H1 (cell line): ENCODE measurements at regions of chr1 and their contacts with region 1.

Region 1: DNA sequence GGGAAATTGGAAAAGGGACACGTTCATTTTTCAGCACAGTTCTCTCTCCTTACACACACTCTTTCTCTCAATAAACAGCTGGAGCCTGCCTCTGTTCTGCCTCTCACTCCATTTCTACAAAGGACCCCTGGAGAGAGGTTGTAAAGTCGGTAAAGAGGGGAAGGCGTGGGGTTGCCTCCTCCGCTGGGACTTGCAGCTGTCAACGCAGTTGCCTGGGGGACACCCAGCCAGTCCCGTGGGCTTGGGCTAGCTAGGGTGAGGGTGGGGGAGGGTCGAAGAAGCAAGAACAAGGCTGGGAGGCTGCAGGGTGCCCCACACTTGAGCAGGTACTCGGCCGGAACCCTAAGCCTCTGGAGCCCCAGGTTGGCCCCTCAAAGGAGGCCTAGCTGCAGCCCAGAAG is 27.6 kb downstream of the C1orf216 start:
- DNase-seq: no peak
- H3K4me3 ChIP-seq: peak overlapping the region in 2 of 4 experiments; percentile 3 to 6; a peak in 3 of 8 replicates
- H3K27ac ChIP-seq: no peak overlapping the region
- H3K4me1 ChIP-seq: peaks cover 2 to 14% (median 5%) of the 10 kb centered on the region in 4 experiments; a peak in 6 of 7 replicates
- H3K27me3 ChIP-seq: no peaks in the 10 kb centered on the region
- CTCF ChIP-seq: no peak
- EP300 ChIP-seq: no peak
- POLR2A ChIP-seq: no peak
- RAD21 ChIP-seq: no peak

Region 2: DNA sequence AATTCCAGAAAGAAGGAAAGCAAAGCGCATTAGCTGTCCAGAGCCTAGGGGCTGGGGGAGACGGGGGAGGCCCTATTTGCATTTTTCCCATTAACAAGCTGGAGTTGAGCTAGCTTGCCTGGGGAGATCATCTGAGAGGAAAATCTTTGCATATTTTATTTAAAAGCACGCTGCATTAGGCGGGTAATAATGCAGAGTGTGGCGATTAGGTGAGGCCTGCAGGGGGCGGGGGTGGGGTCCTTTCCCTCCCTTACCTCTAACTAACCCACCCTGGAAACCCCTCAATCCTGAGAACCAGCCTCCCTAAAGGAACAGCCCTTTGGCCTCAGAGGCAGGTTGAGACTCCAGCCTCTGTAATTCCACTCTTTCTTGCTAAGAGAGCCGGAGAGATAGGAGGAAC is 11.4 kb after region 1 on chr1:
- CTCF ChIA-PET with region 1: interaction called, 14 read pairs
- POLR2A ChIA-PET with region 1: interaction called, 5 read pairs
- DNase-seq: no peak
- H3K4me3 ChIP-seq: peak overlapping the region in 3 of 4 experiments; percentile 13 to 45 (median 32); a peak in 3 of 8 replicates
- H3K27ac ChIP-seq: no peak overlapping the region
- H3K4me1 ChIP-seq: peaks cover 8 to 19% (median 11%) of the 10 kb centered on the region in 4 experiments
- H3K27me3 ChIP-seq: peaks cover 0 to 4% (median 3%) of the 10 kb centered on the region in 4 experiments; a peak in 4 of 7 replicates
- CTCF ChIP-seq: peak; percentile 30 to 41 (median 32)
- EP300 ChIP-seq: no peak
- POLR2A ChIP-seq: no peak
- RAD21 ChIP-seq: peak in 1 of 2 experiments; percentile 21; a peak in 2 of 4 replicates